AG04449 (cell line): ENCODE measurements at regions of chrX and their contacts with region 1.

Region 1: GRCh38 chrX:74521961-74522751 is 92.3 kb downstream of the RLIM start:
- DNase-seq: no peak
- H3K4me3 ChIP-seq: no peak overlapping the region
- CTCF ChIP-seq: no peak

Region 2: DNA sequence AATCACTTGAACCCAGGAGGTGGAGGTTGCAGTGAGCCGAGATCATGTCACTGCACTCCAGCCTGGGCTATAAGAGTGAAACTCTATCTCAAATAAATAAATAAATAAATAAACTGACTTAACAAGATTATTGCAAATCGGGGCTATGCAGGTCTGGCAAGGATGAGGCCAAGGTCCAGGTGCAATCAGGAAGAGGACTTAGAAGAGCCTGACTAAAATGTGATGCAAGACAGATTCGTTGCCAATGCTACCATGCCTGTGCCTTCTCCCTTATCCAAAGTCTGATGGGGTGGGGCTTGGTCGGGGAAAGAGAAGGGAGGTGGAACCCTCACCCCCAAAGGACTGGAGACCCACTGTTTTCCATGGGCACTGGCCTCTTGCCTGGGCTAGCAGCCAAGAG is 203.5 kb before region 1 on chrX:
- CTCF ChIA-PET with region 1: no interaction called
- POLR2A ChIA-PET with region 1: no interaction called
- DNase-seq: no peak
- H3K4me3 ChIP-seq: no peak overlapping the region
- CTCF ChIP-seq: no peak

Region 3: GRCh38 chrX:74536152-74536831 is 14.1 kb after region 1 on chrX:
- CTCF ChIA-PET with region 1: interaction called, 21 read pairs
- POLR2A ChIA-PET with region 1: interaction called, 8 read pairs
- DNase-seq: no peak
- H3K4me3 ChIP-seq: peak overlapping the region; percentile 49
- CTCF ChIP-seq: peak; percentile 54